ENCODE measurements at regions of chr6 and their contacts with region 1.

Region 1: GRCh38 chr6:13294499-13295069 is 33.8 kb downstream of the TBC1D7 start:
- DNase-seq: no peak
- H3K4me3 ChIP-seq: no peak overlapping the region
- H3K4me3 Mint-ChIP-seq: no peak overlapping the region
- H3K27ac Mint-ChIP-seq: peak overlapping the region; percentile 58
- H3K4me1 ChIP-seq: peaks cover 22% of the 10 kb centered on the region
- H3K4me1 Mint-ChIP-seq: peaks cover 32% of the 10 kb centered on the region
- H3K27me3 ChIP-seq: no peaks in the 10 kb centered on the region
- H3K27me3 Mint-ChIP-seq: no peaks in the 10 kb centered on the region
- CTCF ChIP-seq: no peak

Region 2: DNA sequence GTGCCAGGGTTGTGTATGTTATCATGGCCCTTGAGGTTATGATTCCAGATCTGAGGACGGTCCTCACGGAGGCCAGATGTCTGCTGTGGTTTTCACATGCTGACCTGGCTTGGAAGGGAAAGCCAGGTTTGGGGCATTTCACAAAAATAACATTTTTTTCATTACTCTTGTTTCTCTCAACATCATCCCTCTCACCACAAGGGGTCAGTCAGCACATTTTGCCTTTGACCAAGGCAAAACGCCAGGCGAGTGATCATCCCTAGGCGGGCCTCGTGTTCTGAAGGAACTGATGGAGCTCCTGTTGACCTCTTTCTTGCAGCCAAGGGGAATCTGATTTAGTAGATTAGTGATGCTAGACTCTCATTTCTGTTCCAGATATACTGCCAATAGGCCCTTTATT is 99.7 kb before region 1 on chr6:
- CTCF ChIA-PET with region 1: interaction called, 5 read pairs
- POLR2A ChIA-PET with region 1: no interaction called
- intact Hi-C with region 1: loop called (anchors 5 kb)
- DNase-seq: peak; percentile 70 to 71
- H3K4me3 ChIP-seq: no peak overlapping the region
- H3K4me3 Mint-ChIP-seq: no peak overlapping the region
- H3K27ac Mint-ChIP-seq: no peak overlapping the region
- H3K4me1 ChIP-seq: 0 out of 2 replicates have a peak, but pooled peaks cover 4% of the 10 kb centered on the region
- H3K4me1 Mint-ChIP-seq: peaks cover 8% of the 10 kb centered on the region
- H3K27me3 ChIP-seq: no peaks in the 10 kb centered on the region
- H3K27me3 Mint-ChIP-seq: no peaks in the 10 kb centered on the region
- CTCF ChIP-seq: peak; percentile 55 to 77

Region 3: DNA sequence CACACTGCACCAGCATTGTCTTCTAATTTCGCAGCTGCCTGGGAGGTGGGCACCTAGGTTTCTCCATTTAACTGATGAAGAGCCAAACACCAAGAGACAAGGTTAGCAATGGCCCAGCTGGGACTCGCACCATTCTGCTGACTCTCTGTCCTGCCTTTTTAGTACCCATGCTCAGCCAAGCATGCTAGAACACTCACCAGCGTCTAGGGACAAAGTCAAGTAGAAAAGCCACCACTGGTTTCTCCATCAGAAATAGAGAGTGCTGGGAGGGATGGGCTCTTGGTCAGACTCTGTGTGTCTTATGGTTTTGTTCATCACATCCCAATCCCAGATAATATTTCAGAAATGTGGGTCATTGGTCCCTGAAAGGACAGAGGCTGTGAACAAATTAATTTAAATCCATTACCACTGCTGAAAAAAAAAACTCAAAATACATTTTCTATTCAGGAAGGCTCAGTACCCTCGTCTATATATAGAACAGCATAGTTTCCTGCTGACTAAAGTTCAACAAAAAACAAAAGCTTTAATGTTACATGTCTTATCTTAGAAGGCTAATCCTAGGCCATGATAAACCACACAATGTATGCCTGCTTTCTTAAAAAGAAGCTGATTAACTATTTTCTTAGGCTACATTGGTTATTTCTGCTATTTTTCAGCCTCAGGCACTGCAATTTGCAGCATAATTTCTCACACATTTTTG is 77.2 kb before region 1 on chr6:
- CTCF ChIA-PET with region 1: no interaction called
- POLR2A ChIA-PET with region 1: no interaction called
- intact Hi-C with region 1: loop called (anchors 5 kb)
- DNase-seq: peak in 1 of 2 experiments; percentile 25
- H3K4me3 ChIP-seq: no peak overlapping the region
- H3K4me3 Mint-ChIP-seq: peak overlapping the region; percentile 1
- H3K27ac Mint-ChIP-seq: peak overlapping the region; percentile 81
- H3K4me1 ChIP-seq: peaks cover 39% of the 10 kb centered on the region
- H3K4me1 Mint-ChIP-seq: peaks cover 23% of the 10 kb centered on the region
- H3K27me3 ChIP-seq: no peaks in the 10 kb centered on the region
- H3K27me3 Mint-ChIP-seq: no peaks in the 10 kb centered on the region
- CTCF ChIP-seq: no peak

Region 4: GRCh38 chr6:13268913-13269518 is 25.6 kb before region 1 on chr6:
- CTCF ChIA-PET with region 1: no interaction called
- POLR2A ChIA-PET with region 1: no interaction called
- intact Hi-C with region 1: loop called (anchors 1 kb)
- DNase-seq: peak; percentile 51 to 55
- H3K4me3 ChIP-seq: no peak overlapping the region
- H3K4me3 Mint-ChIP-seq: no peak overlapping the region
- H3K27ac Mint-ChIP-seq: peak overlapping the region; percentile 82
- H3K4me1 ChIP-seq: peaks cover 40% of the 10 kb centered on the region
- H3K4me1 Mint-ChIP-seq: peaks cover 38% of the 10 kb centered on the region
- H3K27me3 ChIP-seq: no peaks in the 10 kb centered on the region
- H3K27me3 Mint-ChIP-seq: no peaks in the 10 kb centered on the region
- CTCF ChIP-seq: no peak

Region 5: GRCh38 chr6:14305624-14306023 is 1011.0 kb after region 1 on chr6:
- CTCF ChIA-PET with region 1: no interaction called
- POLR2A ChIA-PET with region 1: no interaction called
- intact Hi-C with region 1: no loop called
- DNase-seq: no peak
- H3K4me3 ChIP-seq: no peak overlapping the region
- H3K4me3 Mint-ChIP-seq: no peak overlapping the region
- H3K27ac Mint-ChIP-seq: no peak overlapping the region
- H3K4me1 ChIP-seq: peaks cover 30% of the 10 kb centered on the region
- H3K4me1 Mint-ChIP-seq: peaks cover 22% of the 10 kb centered on the region
- H3K27me3 ChIP-seq: no peaks in the 10 kb centered on the region
- H3K27me3 Mint-ChIP-seq: no peaks in the 10 kb centered on the region
- CTCF ChIP-seq: no peak

Measured in Caco-2 (cell line).